ENCODE measurements at regions of chr2 and their contacts with region 1.

Region 1: GRCh38 chr2:64750817-64751285 is 97.1 kb upstream of the SERTAD2 start:
- DNase-seq: no peak
- ATAC-seq: peak; percentile 89 to 93

Region 2: DNA sequence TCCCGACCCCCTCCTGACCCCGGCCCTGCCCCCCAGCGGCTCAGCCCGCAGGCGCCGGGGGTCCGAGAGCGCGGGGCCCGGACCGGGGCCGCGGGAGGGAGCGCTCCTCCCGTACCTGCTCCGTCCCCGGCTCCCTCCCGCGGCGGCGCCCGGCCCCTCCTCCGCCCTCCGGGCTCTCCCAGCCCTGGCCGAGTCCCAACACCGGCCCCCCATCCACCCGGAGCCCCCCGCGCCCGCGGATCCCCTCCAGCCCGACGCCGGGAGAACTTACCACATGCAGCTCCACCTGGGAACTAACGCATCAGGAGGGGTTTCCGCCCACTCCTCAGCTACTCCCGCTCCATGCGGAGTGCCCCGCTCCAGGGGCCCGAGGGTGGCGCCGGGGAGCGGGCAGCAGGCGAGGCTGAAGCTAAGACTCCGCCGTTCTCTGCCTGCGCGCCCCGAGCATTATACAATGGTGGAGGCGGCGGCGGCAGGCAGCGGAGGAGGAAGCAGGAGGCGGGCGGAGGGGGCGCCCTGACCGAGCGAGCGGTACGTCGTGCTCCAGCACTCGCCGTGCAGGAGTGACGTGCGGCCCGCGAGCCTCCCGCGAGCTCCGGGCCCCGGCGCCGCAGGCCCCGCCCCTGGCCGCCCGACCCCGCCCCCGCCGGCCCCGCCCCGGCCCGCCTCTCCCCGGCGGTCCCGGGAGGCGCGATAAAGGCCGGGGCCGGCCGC is 97.3 kb before region 1 on chr2 and contains the start of gene SERTAD2:
- intact Hi-C with region 1: loop called (anchors 5 to 10 kb)
- DNase-seq: peak; percentile 93
- ATAC-seq: peak; percentile 92
- total RNA-seq, gene SERTAD2: 14.3 to 14.7 TPM

Region 3: DNA sequence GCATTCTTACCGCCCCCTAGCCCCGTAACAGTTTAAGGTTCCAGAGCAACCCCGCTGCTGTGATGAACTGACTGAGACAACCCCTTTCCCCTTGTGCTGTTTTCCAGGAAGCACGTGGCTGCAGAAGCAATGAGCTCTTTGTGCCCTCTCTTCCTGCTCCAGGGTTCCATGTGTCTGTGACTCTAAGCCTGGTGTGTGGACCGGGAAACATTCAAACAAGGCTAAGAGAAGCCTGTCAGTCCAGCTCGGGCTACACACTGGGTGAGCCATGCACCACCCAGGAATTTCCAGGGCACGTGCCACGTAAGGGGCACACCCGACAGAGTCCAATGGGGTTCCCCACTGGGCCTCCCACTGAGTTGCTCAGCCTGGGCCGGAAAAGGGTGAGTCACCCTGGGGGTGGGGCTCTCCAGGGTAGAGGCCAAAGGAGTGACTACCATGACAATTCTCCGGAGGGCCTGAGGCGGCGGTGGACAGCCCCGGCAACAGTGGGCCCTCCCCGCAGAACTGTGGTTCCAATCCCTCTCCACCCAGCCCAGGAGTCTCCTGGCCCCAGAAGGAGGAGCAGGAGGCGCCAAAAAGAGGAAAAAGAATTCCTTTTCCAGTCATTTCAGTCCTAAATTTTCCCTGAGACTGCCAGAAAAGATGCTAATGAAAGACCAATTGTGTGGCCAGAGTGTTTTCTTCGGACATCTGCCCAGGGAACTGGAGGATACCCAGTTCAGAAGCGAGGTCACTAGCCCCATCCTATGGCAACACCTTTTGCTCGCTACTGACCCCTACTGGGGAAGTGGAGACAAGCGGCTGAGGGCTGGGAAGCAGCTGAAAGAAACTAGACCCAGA is 80.5 kb after region 1 on chr2:
- intact Hi-C with region 1: loop called in 1 of 2 experiments (anchors 5 kb)
- DNase-seq: peak; percentile 94
- ATAC-seq: peak; percentile 90 to 97

Region 4: GRCh38 chr2:64859312-64860212 is 108.7 kb after region 1 on chr2:
- intact Hi-C with region 1: loop called in 1 of 2 experiments (anchors 1 kb)
- DNase-seq: peak; percentile 91
- ATAC-seq: peak; percentile 86 to 89